ENCODE measurements at regions of chr5 and their contacts with region 1.

Region 1: DNA sequence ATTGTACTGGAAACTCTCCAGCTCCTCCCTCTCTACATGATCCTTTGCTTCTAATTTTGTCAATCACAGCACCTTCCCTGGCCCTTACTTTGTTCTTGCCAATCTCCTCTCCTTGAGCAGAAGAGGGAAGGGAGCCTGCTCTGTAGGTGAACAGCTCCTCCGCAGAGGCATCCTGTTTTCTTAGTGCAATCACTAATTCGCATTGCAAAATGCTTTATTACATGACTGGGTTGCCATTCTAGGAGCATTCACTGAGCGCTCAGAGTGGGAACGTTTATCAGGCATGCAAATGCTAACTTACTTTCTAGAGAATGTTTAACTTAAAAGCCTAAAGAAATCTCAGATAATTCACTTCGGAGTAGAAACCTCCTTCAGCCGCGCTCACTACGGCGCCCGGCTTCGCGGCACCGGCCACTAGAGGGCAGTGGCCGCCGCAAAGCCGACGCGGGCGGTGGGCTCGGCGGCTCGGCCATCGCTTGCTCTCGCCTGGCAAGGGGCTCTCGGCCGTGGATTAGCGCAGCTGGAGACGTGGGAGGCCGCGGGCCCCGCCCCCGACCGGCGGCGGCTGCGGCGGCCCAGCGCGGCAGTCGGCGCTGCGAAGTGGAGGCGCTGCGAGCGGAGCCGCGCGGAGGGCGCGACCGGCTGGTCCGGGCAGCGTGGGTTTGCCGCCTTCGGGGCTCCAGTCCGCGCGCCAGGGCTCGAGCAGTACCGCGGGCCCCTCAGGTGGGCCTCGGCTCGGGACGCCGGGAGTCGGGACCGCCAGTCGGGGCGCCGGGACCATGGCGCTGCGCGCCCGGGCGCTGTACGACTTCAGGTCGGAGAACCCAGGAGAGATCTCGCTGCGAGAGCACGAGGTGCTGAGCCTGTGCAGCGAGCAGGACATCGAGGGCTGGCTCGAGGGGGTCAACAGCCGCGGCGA is at the start of gene SNX18:
- DNase-seq: peak; percentile 92
- ATAC-seq: peak; percentile 88
- H3K4me3 Mint-ChIP-seq: peak within 1 kb of the TSS; percentile 86
- H3K27ac Mint-ChIP-seq: peak within 1 kb of the TSS; percentile 50
- H3K4me1 Mint-ChIP-seq: peaks cover 25% of the 10 kb centered on the region
- H3K27me3 Mint-ChIP-seq: no peaks in the 10 kb centered on the region
- CTCF ChIP-seq: peak; percentile 60
- total RNA-seq, gene SNX18: 59.2 and 63.4 TPM in 2 replicates

Region 2: GRCh38 chr5:54229041-54229780 is 288.2 kb before region 1 on chr5:
- CTCF ChIA-PET with region 1: no interaction called
- POLR2A ChIA-PET with region 1: no interaction called
- intact Hi-C with region 1: no loop called
- DNase-seq: peak; percentile 47
- ATAC-seq: peak; percentile 89
- H3K4me3 Mint-ChIP-seq: peak overlapping the region; percentile 1
- H3K27ac Mint-ChIP-seq: no peak overlapping the region
- H3K4me1 Mint-ChIP-seq: peaks cover 31% of the 10 kb centered on the region
- H3K27me3 Mint-ChIP-seq: no peaks in the 10 kb centered on the region
- CTCF ChIP-seq: no peak

Region 3: GRCh38 chr5:54243473-54244080 is 273.9 kb before region 1 on chr5:
- CTCF ChIA-PET with region 1: no interaction called
- POLR2A ChIA-PET with region 1: no interaction called
- intact Hi-C with region 1: loop called (anchors 10 kb)
- DNase-seq: no peak
- ATAC-seq: no peak
- H3K4me3 Mint-ChIP-seq: no peak overlapping the region
- H3K27ac Mint-ChIP-seq: no peak overlapping the region
- H3K4me1 Mint-ChIP-seq: peaks cover 2% of the 10 kb centered on the region
- H3K27me3 Mint-ChIP-seq: no peaks in the 10 kb centered on the region
- CTCF ChIP-seq: no peak

Region 4: GRCh38 chr5:54533541-54534190 is 16.2 kb after region 1 on chr5:
- CTCF ChIA-PET with region 1: interaction called, 7 read pairs
- POLR2A ChIA-PET with region 1: no interaction called
- intact Hi-C with region 1: loop called (anchors 1 kb)
- DNase-seq: no peak
- ATAC-seq: no peak
- H3K4me3 Mint-ChIP-seq: no peak overlapping the region
- H3K27ac Mint-ChIP-seq: peak overlapping the region; percentile 12
- H3K4me1 Mint-ChIP-seq: peaks cover 60% of the 10 kb centered on the region
- H3K27me3 Mint-ChIP-seq: no peaks in the 10 kb centered on the region
- CTCF ChIP-seq: no peak

Region 5: DNA sequence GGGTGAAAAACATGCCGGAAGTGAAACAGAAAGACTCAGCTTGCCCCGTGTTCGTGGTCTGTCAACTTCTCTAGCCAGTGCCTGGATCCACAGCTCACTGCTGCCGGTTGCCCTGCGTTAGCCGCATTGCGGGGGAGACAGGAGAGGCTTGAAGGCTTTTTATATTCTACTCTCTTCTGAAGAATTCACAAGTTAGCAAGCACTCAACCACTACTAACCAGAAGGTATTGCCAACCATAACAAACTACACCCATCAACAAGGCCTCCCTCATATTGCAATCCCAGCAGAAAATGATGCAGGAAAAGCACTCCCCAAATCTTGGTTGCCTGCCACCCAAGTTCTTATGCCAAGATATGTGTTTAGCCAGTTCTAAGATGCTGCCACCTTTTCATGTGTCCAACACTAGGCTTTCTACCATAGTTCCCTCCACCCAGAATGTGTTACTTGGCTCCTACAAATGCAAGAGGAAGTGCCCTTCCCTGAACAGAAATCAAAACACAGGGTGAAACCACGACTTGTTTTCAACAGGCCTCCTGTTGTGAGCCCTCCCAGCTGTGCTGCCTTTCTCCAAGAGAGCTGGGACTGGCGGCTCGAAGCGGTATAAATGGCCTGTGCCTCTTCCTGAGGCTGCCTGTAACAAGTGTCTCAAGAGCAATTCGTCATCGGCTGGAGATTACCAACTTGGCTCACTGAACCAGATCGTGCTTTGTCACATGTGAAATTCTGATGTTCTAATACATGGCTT is 129.1 kb after region 1 on chr5:
- CTCF ChIA-PET with region 1: interaction called, 10 read pairs
- POLR2A ChIA-PET with region 1: interaction called, 16 read pairs
- intact Hi-C with region 1: loop called (anchors 1 kb)
- DNase-seq: peak; percentile 47
- ATAC-seq: peak; percentile 93
- H3K4me3 Mint-ChIP-seq: peak overlapping the region; percentile 71
- H3K27ac Mint-ChIP-seq: peak overlapping the region; percentile 93
- H3K4me1 Mint-ChIP-seq: peaks cover 69% of the 10 kb centered on the region
- H3K27me3 Mint-ChIP-seq: no peaks in the 10 kb centered on the region
- CTCF ChIP-seq: no peak

Region 6: GRCh38 chr5:54774281-54775170 is 257.1 kb after region 1 on chr5:
- CTCF ChIA-PET with region 1: interaction called, 3 read pairs
- POLR2A ChIA-PET with region 1: no interaction called
- intact Hi-C with region 1: loop called (anchors 5 kb)
- DNase-seq: no peak
- ATAC-seq: peak; percentile 16
- H3K4me3 Mint-ChIP-seq: no peak overlapping the region
- H3K27ac Mint-ChIP-seq: no peak overlapping the region
- H3K4me1 Mint-ChIP-seq: peaks cover 62% of the 10 kb centered on the region
- H3K27me3 Mint-ChIP-seq: no peaks in the 10 kb centered on the region
- CTCF ChIP-seq: no peak

Region 7: DNA sequence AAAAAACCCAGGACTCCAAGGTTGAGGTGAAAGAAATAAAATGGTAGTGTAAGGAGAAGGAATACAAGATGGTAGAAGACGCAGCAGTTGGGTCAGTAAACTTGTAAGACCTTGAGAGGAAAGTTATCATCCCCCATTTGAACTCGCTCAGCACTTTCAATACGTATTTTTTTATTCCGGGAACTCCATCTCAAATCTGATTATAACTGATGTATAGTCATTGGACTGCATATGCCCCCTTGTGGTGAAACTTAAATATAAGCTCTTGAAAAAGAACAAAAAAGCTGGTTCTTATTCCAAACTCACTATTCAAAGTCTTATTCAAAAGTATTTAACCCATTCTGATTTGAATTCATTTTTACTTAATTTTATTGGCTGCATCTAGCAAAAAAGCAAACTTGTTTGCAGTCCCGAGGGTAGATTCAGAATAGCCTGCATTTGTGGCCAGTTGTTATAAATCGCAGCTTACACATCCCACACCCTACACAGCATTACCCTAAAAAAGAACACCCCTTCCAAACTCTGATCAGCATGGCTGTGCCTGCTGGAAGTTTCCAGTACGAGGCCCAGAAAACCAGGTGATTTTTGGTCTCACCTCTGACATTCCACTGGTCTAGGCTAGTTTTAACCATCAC is 350.0 kb after region 1 on chr5:
- CTCF ChIA-PET with region 1: interaction called, 128 read pairs
- POLR2A ChIA-PET with region 1: interaction called, 24 read pairs
- intact Hi-C with region 1: loop called (anchors 1 kb)
- DNase-seq: no peak
- ATAC-seq: peak; percentile 77
- H3K4me3 Mint-ChIP-seq: peak overlapping the region; percentile 53
- H3K27ac Mint-ChIP-seq: no peak overlapping the region
- H3K4me1 Mint-ChIP-seq: peaks cover 4% of the 10 kb centered on the region
- H3K27me3 Mint-ChIP-seq: peaks cover 29% of the 10 kb centered on the region
- CTCF ChIP-seq: no peak

Region 8: DNA sequence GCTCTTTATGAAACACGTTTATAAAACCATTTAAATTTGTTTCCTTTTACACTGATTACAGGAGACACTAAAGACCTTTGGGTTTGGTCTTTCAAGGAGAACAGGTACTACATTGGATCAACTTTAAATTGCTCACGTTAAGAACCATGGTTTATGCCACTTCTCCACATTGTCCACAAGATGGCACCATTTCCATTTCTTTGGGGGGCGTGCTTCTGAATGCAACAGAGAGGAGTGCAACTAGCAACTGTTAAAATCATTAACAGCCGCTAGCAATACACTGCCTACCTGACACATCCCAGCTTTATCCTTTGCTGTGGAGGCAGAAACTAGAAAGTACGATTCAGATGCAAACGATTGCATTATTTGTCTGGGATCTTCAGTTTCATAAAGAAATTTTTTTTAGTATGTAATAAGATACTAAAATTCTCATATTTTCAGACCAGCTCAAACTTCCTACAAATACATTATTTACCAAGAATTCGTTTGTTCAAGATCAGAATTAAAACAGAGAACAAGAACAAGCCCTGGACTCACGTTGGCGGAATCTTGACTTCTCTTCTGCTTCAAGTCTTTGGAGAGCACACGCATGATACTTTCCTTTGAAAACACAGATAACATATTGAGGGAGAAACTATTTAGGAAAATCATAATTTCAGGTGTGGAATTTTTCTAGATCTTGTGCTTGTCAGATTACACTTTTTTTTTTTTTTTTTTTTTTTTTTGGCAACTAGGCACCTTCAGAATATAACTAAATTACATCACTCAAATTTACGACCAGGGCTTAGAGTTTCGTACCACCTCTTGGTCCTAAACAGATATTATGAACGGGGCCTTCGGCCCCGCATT is 654.8 kb after region 1 on chr5:
- CTCF ChIA-PET with region 1: no interaction called
- POLR2A ChIA-PET with region 1: no interaction called
- intact Hi-C with region 1: loop called (anchors 2 kb)
- DNase-seq: no peak
- ATAC-seq: peak; percentile 53
- H3K4me3 Mint-ChIP-seq: peak overlapping the region; percentile 88
- H3K27ac Mint-ChIP-seq: no peak overlapping the region
- H3K4me1 Mint-ChIP-seq: peaks cover 33% of the 10 kb centered on the region
- H3K27me3 Mint-ChIP-seq: peaks cover 51% of the 10 kb centered on the region
- CTCF ChIP-seq: peak; percentile 88

Measured in activated B cell treated with CpG ODN at 0.5 μM for 24 hours (primary cell).